Astrocyte of the cerebellum (primary cell): ENCODE measurements at regions of chr12 and their contacts with region 1.

Region 1: DNA sequence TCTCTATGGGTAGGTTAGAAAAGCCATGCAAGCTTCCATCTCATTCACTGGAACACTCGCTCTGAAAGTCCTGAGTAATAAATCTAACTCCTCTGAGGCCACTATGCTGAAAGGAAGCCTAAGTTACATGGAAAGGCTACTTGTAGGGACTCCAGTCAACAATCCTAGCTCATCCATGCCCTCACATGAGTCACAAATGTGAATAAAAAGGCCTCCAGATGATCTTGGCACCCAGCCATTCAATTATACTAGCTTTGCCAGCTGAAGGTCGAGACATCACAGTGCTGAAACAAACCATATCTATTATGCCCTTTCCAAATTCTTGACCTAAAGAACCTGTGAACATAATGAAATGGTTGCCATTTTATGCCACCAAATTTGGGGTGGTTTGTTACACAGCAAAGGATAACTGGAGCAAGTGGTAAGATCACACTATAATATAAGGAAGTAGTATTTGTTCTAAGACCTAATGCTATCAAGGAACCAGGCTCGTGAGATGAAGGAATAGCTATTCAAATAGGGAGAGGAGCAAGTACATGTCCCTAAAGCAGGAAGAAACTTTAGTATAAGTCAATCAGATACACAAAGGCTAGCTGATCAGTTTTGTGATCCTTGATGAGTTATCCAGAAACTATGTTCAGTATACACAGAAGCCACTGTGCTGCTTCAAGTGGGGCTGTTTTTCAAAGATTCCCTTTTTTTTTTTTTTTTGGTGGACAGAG is 142.1 kb downstream of the MED13L start:
- DNase-seq: no peak
- H3K4me3 ChIP-seq: no peak overlapping the region
- CTCF ChIP-seq: no peak

Region 2: DNA sequence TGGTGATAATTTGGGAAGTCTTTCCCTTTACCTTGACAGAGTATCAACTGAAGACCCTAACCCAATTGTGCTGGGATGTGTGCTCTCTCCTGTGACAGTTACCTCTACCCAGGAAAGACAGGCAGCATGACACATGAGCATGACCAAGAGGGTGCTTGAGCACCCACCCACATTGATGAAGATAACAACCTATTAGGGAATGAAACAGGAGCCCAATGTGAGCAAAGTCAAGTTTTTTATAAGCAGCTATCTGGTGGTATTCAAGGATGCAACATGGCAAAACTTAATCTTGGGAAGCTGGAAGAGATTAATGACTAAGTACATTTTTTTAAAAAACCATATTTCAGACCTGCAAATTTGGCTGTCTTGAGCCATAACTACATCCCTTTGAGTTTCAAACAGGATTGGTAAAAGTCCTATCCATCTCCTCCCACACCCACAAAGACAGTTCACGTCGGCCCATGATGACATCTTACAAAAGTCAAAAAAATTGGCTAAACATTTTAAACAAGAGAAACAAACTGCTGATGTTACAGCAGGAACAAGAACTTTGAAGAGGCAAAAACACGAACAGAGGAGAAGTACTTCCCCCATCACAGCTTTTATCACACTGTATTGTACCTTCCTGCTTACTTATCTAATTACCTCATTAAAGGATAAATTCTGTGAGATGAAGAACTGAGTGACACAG is 81.8 kb after region 1 on chr12:
- in situ Hi-C with region 1: loop called (anchors 5 kb)
- DNase-seq: no peak
- H3K4me3 ChIP-seq: no peak overlapping the region
- CTCF ChIP-seq: no peak